Heart right ventricle (tissue), 16 donors: ENCODE measurements at regions of chr1 and their contacts with region 1.

Region 1: DNA sequence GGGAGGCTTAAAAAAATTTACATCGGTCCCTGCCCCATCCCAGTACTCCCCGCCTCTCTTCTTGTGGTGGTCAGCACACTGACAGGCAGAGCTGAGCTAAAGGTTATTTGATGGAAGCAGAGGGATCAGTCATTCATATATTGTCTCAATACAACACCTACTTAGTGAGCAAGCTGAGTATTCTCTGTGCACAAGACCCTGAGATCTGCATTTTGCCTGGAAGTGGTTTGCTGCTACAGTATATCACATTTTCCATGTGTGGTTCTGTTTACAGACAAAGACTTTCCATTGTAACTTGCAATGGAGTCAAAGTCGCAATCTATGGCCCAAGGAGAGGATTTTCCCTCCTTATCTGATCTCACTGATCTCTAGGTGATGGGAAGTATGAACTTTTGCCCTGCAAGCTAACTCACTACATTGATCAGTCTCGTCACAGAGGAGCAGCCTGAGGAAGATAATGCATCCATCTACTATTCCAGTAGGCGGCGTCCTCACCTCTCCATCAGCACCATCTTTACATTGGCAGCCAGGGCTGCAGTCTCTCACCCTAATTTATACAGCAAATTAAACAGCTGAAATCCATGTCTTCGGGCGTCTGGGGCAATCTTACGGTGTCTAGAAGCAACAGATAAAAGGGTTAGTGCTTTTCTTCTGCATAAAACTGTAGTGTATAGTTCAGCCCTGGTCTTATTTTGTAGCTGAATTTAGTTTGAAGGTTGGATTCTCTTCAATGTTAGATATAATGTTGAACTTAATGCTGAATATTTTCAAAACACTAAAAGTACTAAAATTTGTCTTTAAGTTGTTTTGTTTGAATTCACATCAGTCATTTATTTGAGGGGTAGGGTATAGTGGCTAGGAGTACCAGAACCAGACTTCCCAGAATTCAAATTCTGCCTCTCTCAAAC is 3.2 kb upstream of the TRAF5 start:
- DNase-seq: peak in 1 of 2 donors; percentile 28
- ATAC-seq: peak in 4 of 8 donors; percentile 38 to 65 (median 53)
- H3K4me3 ChIP-seq: no peak overlapping the region
- H3K27ac ChIP-seq: no peak overlapping the region
- H3K4me1 ChIP-seq: peaks cover 0 to 24% (median 14%) of the 10 kb centered on the region in 9 donors
- H3K27me3 ChIP-seq: no peaks in the 10 kb centered on the region
- CTCF ChIP-seq: peak; percentile 39 to 82 (median 67)

Region 2: GRCh38 chr1:211382714-211383480 is 59.5 kb after region 1 on chr1:
- intact Hi-C with region 1: loop called in 3 of 10 experiments (anchors 2 to 5 kb)
- DNase-seq: peak; percentile 94 to 96
- ATAC-seq: peak; percentile 100
- H3K4me3 ChIP-seq: peak overlapping the region; percentile 50 to 82 (median 68)
- H3K27ac ChIP-seq: peak overlapping the region; percentile 69 to 97 (median 94)
- H3K4me1 ChIP-seq: peaks cover 2 to 21% (median 13%) of the 10 kb centered on the region in 9 donors
- H3K27me3 ChIP-seq: no peaks in the 10 kb centered on the region
- CTCF ChIP-seq: no peak

Region 3: GRCh38 chr1:211393203-211393602 is 69.8 kb after region 1 on chr1:
- intact Hi-C with region 1: no loop called
- DNase-seq: no peak
- ATAC-seq: no peak
- H3K4me3 ChIP-seq: no peak overlapping the region
- H3K27ac ChIP-seq: no peak overlapping the region
- H3K4me1 ChIP-seq: no peaks in the 10 kb centered on the region
- H3K27me3 ChIP-seq: no peaks in the 10 kb centered on the region
- CTCF ChIP-seq: no peak

Region 4: GRCh38 chr1:211476200-211476849 is 152.9 kb after region 1 on chr1:
- intact Hi-C with region 1: loop called in 5 of 10 experiments (anchors 10 kb)
- DNase-seq: peak; percentile 44 to 67
- ATAC-seq: peak in 4 of 8 donors; percentile 43 to 64 (median 57)
- H3K4me3 ChIP-seq: no peak overlapping the region
- H3K27ac ChIP-seq: no peak overlapping the region
- H3K4me1 ChIP-seq: peaks cover 0 to 9% (median 5%) of the 10 kb centered on the region in 9 donors
- H3K27me3 ChIP-seq: peaks cover 0 to 32% (median 20%) of the 10 kb centered on the region in 7 donors
- CTCF ChIP-seq: peak; percentile 54 to 92 (median 80)

Region 5: DNA sequence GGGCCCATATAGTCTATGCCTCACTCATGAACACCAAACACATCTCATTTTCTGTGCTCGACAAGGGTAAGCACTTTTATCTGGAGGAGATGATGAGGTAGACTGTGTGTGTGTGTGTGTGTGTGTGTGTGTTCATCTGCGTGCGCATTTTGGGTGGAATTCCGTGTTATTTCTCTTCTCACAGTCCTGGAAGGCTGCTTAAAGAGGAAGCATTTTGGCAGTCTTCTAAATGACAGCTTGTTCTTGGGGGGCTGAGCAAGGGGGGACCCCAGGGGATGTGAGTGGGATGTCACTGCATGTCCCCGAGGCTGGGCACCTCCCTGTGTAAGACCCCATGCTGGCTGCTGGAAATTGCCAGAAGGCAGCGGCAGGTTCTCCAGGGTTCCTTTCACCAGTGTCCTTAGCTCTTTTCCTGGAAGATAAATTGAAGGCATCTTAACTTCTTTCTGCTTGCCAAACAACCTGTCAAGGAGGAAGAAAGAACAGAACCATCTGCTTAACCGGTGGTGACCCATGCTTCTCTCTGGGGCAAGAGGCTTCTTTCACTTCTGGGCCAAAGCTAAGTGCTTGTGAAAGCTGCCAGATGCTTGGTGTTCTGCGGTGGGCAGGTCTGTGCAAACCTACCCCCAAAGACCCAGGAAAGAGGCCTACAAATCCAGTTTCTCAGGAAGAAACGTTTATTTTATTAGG is 178.4 kb after region 1 on chr1:
- intact Hi-C with region 1: loop called in 1 of 10 experiments (anchors 10 kb)
- DNase-seq: no peak
- ATAC-seq: no peak
- H3K4me3 ChIP-seq: no peak overlapping the region
- H3K27ac ChIP-seq: no peak overlapping the region
- H3K4me1 ChIP-seq: no peaks in the 10 kb centered on the region
- H3K27me3 ChIP-seq: peaks cover 0 to 17% (median 0%) of the 10 kb centered on the region in 7 donors
- CTCF ChIP-seq: no peak

Region 6: DNA sequence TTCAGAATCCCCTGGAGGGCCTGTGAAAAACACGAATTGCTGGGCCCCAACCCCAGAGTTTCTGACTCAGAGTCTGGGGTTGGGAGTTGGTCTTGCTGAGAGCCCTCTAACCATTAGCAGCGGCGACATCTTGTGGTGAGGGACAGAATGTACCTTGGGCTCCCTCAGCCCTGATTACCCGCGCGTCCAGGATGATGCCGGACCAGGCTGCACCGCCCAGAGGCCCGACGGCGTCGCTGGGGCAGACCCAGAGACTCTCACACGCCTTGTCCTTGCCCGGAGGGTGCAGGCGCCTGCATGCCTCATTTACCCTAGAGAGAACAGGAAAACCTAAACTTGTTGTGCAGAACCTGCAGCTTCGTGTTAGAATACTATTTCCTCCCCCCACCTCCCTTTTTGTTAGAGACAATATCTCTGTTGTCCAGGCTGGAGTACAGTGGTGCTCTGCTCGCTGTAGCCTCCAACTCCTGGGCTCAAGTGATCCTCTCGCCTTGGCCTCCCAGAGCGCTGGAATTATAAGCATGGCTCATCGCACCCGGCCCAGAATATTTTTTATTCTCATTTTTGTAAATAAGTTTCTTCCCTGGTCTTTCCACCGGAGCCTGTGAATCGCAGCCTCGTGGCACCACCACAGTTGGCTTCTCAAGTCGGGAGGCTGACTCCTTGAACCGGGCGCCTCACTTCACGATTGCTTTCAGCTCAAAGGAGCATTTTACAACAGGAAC is 190.8 kb after region 1 on chr1:
- intact Hi-C with region 1: loop called in 5 of 10 experiments (anchors 5 to 10 kb)
- DNase-seq: peak; percentile 72
- ATAC-seq: peak; percentile 70 to 91 (median 85)
- H3K4me3 ChIP-seq: no peak overlapping the region
- H3K27ac ChIP-seq: peak overlapping the region in 1 of 10 donors; percentile 10
- H3K4me1 ChIP-seq: peaks cover 0 to 22% (median 9%) of the 10 kb centered on the region in 9 donors
- H3K27me3 ChIP-seq: peaks cover 0 to 13% (median 0%) of the 10 kb centered on the region in 7 donors
- CTCF ChIP-seq: peak; percentile 59 to 85 (median 76)

Region 7: GRCh38 chr1:211654838-211655787 is 331.7 kb after region 1 on chr1:
- intact Hi-C with region 1: loop called in 4 of 10 experiments (anchors 5 to 10 kb)
- DNase-seq: peak; percentile 87
- ATAC-seq: peak; percentile 91 to 97 (median 95)
- H3K4me3 ChIP-seq: peak overlapping the region in 4 of 10 donors; percentile 7 to 48 (median 18)
- H3K27ac ChIP-seq: peak overlapping the region in 1 of 10 donors; percentile 7
- H3K4me1 ChIP-seq: peaks cover 0 to 9% (median 0%) of the 10 kb centered on the region in 9 donors
- H3K27me3 ChIP-seq: no peaks in the 10 kb centered on the region
- CTCF ChIP-seq: peak; percentile 88 to 95 (median 94)

Region 8: GRCh38 chr1:211788626-211789025 is 465.2 kb after region 1 on chr1:
- intact Hi-C with region 1: no loop called
- DNase-seq: no peak
- ATAC-seq: no peak
- H3K4me3 ChIP-seq: no peak overlapping the region
- H3K27ac ChIP-seq: no peak overlapping the region
- H3K4me1 ChIP-seq: peaks cover 0 to 8% (median 7%) of the 10 kb centered on the region in 9 donors
- H3K27me3 ChIP-seq: no peaks in the 10 kb centered on the region
- CTCF ChIP-seq: no peak